Natural killer cell (primary cell): ENCODE measurements at regions of chr1 and their contacts with region 1.

Region 1: GRCh38 chr1:231460614-231461013 is 38.5 kb upstream of the EGLN1 start:
- DNase-seq: peak; percentile 33 to 86
- ATAC-seq: peak; percentile 82 to 97 (median 91)
- H3K4me3 ChIP-seq: no peak overlapping the region
- H3K4me3 Mint-ChIP-seq: peak overlapping the region; percentile 62
- H3K27ac ChIP-seq: no peak overlapping the region
- H3K27ac Mint-ChIP-seq: peak overlapping the region in 1 of 2 donors; percentile 37
- H3K4me1 ChIP-seq: peaks cover 10% of the 10 kb centered on the region
- H3K4me1 Mint-ChIP-seq: peaks cover 17 to 21% of the 10 kb centered on the region in 2 donors
- H3K27me3 ChIP-seq: peaks cover 46% of the 10 kb centered on the region
- H3K27me3 Mint-ChIP-seq: peaks cover 51 to 76% of the 10 kb centered on the region in 2 donors
- CTCF ChIP-seq: no peak

Region 2: GRCh38 chr1:231200388-231201031 is 260.1 kb before region 1 on chr1:
- intact Hi-C with region 1: no loop called
- DNase-seq: no peak
- ATAC-seq: no peak
- H3K4me3 ChIP-seq: no peak overlapping the region
- H3K4me3 Mint-ChIP-seq: no peak overlapping the region
- H3K27ac ChIP-seq: no peak overlapping the region
- H3K27ac Mint-ChIP-seq: no peak overlapping the region
- H3K4me1 ChIP-seq: peaks cover 9% of the 10 kb centered on the region
- H3K4me1 Mint-ChIP-seq: peaks cover 5 to 6% of the 10 kb centered on the region in 2 donors
- H3K27me3 ChIP-seq: no peaks in the 10 kb centered on the region
- H3K27me3 Mint-ChIP-seq: peaks cover 9 to 43% of the 10 kb centered on the region in 2 donors
- CTCF ChIP-seq: no peak

Region 3: GRCh38 chr1:231240883-231241735 is 219.5 kb before region 1 on chr1 and contains the start of gene GNPAT:
- intact Hi-C with region 1: no loop called
- DNase-seq: peak; percentile 92 to 96
- ATAC-seq: peak; percentile 97 to 98 (median 97)
- H3K4me3 ChIP-seq: peak within 1 kb of the TSS; percentile 80
- H3K4me3 Mint-ChIP-seq: peak within 1 kb of the TSS; percentile 99
- H3K27ac ChIP-seq: peak within 1 kb of the TSS; percentile 79
- H3K27ac Mint-ChIP-seq: peak within 1 kb of the TSS; percentile 93 to 96
- H3K4me1 ChIP-seq: peaks cover 19% of the 10 kb centered on the region
- H3K4me1 Mint-ChIP-seq: peaks cover 78 to 79% of the 10 kb centered on the region in 2 donors
- H3K27me3 ChIP-seq: no peaks in the 10 kb centered on the region
- H3K27me3 Mint-ChIP-seq: no peaks in the 10 kb centered on the region
- CTCF ChIP-seq: no peak
- total RNA-seq, gene GNPAT: 20.5 to 29.3 (median 23.1) TPM

Region 4: GRCh38 chr1:231421993-231422764 is 38.4 kb before region 1 on chr1 and contains the start of gene EGLN1:
- intact Hi-C with region 1: loop called (anchors 5 kb)
- DNase-seq: peak; percentile 71 to 89
- ATAC-seq: peak; percentile 82 to 92 (median 85)
- H3K4me3 ChIP-seq: peak within 1 kb of the TSS; percentile 57
- H3K4me3 Mint-ChIP-seq: peak within 1 kb of the TSS; percentile 88
- H3K27ac ChIP-seq: peak within 1 kb of the TSS; percentile 51
- H3K27ac Mint-ChIP-seq: peak within 1 kb of the TSS; percentile 54 to 61
- H3K4me1 ChIP-seq: peaks cover 13% of the 10 kb centered on the region
- H3K4me1 Mint-ChIP-seq: peaks cover 40 to 45% of the 10 kb centered on the region in 2 donors
- H3K27me3 ChIP-seq: peaks cover 2% of the 10 kb centered on the region
- H3K27me3 Mint-ChIP-seq: peaks cover 0 to 9% of the 10 kb centered on the region in 2 donors
- CTCF ChIP-seq: no peak
- total RNA-seq, gene EGLN1: 14.2 to 27.5 (median 24.5) TPM